GM12878 (cell line): ENCODE measurements at regions of chr17 and their contacts with region 1.

Region 1: DNA sequence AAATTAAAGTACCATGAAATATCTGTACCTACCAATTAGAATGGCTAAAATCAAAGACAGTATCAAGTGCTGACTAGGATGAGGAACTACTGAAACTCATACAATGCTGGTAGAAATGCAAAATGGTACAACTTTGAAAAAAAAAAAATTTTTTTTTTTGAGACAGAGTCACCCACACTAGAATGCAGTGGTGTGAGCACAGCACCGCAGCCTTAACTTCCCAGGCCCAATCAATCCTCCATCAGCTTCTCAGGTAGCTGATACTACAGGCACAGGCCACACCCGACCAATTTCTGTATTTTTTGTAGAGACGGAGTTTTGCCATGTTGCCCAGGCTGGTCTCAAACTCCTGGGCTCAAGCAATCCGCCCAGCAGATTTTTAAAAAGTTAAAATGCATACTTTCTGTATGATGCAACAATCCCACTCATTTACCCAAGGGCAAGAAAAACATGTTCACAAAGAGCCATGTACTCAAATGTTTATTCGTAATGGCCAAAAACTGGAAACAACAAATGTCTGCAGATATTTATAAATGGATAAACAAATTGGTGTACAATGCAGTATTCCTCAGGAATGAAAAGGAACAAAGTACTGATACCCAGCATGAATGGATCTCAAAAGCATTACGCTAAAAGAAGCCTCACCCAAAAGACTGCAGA is 8.7 kb downstream of the SMURF2 start:
- DNase-seq: no peak
- ATAC-seq: no peak
- H3K4me3 ChIP-seq: no peak overlapping the region
- H3K27ac ChIP-seq: no peak overlapping the region
- H3K4me1 ChIP-seq: peaks cover 6% of the 10 kb centered on the region
- H3K27me3 ChIP-seq: no peaks in the 10 kb centered on the region
- CTCF ChIP-seq: no peak
- EP300 ChIP-seq: no peak
- POLR2A ChIP-seq: no peak
- RAD21 ChIP-seq: no peak

Region 2: DNA sequence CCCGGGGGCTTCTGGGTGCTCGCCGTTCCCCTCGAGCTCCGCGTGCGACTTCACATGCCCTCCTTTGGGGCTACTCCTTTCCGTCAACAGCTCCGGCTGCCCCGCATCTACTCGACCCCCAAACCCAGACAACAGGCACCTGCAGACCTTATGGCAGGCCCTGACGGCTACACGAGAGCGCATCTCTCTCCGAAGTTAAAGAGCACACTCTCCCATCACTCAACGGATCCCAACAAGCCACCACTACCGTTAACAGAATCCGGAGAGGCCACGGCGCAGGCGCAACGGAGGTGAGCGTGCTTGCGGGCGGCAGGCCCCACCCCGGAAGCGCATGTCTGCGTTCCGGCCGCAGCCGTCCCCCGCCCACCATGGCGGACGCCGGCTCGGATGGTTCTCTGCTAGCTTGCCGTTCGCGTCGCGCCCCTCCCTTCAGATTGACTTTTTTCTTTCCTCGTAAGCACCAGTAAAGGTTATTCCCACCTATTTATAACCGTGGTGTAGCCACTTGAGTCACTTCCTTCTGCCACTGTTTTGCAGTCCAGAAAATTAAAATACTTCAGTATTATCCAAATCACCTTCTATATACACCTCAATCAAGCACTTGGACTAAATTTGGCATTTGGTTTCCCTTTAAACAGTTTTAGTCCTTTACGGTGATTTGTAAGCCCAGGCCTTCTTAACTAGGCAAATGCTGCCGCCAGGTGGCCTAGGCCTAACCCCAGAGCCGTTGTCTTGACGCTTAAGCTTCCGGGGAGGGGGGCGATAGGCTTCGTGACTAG is 156.5 kb before region 1 on chr17 and contains the start of gene POLG2:
- CTCF ChIA-PET with region 1: interaction called, 28 read pairs
- POLR2A ChIA-PET with region 1: interaction called, 7 read pairs
- RAD21 ChIA-PET with region 1: interaction called, 12 read pairs
- SMC1A ChIA-PET with region 1: interaction called, 7 read pairs
- in situ Hi-C with region 1: loop called (anchors 10 kb)
- intact Hi-C with region 1: no loop called
- DNase-seq: peak; percentile 75
- ATAC-seq: peak; percentile 88
- H3K4me3 ChIP-seq: peak within 1 kb of the TSS; percentile 88
- H3K27ac ChIP-seq: peak within 1 kb of the TSS; percentile 85
- H3K4me1 ChIP-seq: peaks cover 11% of the 10 kb centered on the region; the same call in 1 of the 2 replicates
- H3K27me3 ChIP-seq: no peaks in the 10 kb centered on the region
- CTCF ChIP-seq: peak; percentile 63 to 71 (median 66)
- EP300 ChIP-seq: no peak; a peak in 1 of 4 replicates
- POLR2A ChIP-seq: peak; percentile 95
- RAD21 ChIP-seq: peak; percentile 36; the same call in 1 of the 2 replicates
- polyA plus RNA-seq, gene POLG2: 10.2 to 13.5 TPM

Region 3: GRCh38 chr17:64599187-64599676 is 54.2 kb before region 1 on chr17:
- CTCF ChIA-PET with region 1: interaction called, 23 read pairs
- POLR2A ChIA-PET with region 1: interaction called, 5 read pairs
- RAD21 ChIA-PET with region 1: interaction called, 8 read pairs
- SMC1A ChIA-PET with region 1: interaction called, 15 read pairs
- in situ Hi-C with region 1: no loop called
- intact Hi-C with region 1: no loop called
- DNase-seq: no peak
- ATAC-seq: peak; percentile 98
- H3K4me3 ChIP-seq: peak overlapping the region; percentile 37; the same call in 1 of the 2 replicates
- H3K27ac ChIP-seq: peak overlapping the region; percentile 76
- H3K4me1 ChIP-seq: peaks cover 4% of the 10 kb centered on the region; the same call in 1 of the 2 replicates
- H3K27me3 ChIP-seq: no peaks in the 10 kb centered on the region
- CTCF ChIP-seq: no peak
- EP300 ChIP-seq: no peak
- POLR2A ChIP-seq: peak; percentile 66
- RAD21 ChIP-seq: no peak